ENCODE measurements at regions of chr4 and their contacts with region 1.

Region 1: GRCh38 chr4:6180841-6181631 is 19.3 kb downstream of the JAKMIP1 start:
- DNase-seq: peak; percentile 66
- CTCF ChIP-seq: no peak

Region 2: DNA sequence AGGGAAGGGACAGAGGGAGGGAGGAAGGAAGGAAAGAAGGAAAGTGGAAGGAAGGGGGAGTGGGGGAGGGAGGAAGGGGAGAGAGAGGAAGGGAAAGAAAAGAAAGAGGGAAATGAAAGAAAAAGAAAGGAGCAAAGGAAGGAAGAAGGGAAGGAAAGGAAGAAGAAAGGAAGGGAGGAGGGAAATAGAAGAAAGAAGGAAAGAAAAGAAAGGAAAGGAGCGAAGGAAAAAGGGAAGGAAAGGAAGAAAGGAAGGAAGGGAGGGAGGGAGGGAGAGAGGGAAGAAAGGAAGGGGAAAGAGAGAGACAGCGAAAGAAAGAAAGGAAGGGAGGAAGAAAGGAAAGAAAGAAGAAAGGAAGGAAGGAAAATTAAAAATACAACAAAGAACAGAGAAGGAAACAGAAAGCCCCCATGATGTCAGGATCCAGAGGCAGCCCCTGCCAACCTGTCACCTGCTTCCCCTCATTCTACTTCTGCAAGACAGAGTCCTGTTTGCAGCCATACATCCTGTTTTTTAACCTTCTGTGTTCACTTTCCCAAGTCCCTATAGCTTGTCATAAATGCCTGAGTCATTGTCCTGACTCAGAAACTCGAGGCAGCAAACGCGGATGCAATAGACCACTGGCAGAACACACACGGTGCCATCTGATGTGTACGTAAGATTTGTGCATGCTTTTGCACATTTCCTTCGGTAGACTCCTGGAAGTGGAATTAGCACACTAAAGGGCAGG is 85.8 kb before region 1 on chr4:
- CTCF ChIA-PET with region 1: no interaction called
- POLR2A ChIA-PET with region 1: no interaction called
- DNase-seq: no peak
- CTCF ChIP-seq: no peak

Region 3: DNA sequence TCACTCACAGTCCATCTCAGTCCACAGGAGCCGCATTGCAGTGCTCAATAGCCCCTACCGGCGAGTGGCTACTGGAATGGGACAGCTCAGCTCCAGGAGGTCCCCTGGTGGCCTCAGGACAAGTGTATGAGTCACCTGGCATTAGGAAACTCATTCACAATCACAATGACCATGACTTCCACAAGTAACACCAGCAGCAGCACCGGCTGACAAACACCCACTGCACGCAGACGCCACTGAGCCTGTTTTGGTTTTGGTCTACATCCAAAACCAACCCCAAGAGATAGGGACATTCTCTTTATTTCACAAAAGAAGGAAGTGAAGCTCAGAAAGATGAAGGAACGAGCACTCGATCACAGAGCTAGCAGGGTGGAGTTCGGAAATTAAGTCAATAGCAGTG is 11.2 kb after region 1 on chr4:
- CTCF ChIA-PET with region 1: interaction called, 20 read pairs
- POLR2A ChIA-PET with region 1: interaction called, 3 read pairs
- DNase-seq: no peak
- CTCF ChIP-seq: no peak

Measured in GM10248 (cell line).